Esophagus squamous epithelium (tissue), 5 donors: ENCODE measurements at regions of chr2 and their contacts with region 1.

Region 1: GRCh38 chr2:72150157-72150865 is 2.6 kb upstream of the CYP26B1 start:
- DNase-seq: no peak
- H3K4me3 ChIP-seq: peak overlapping the region in 3 of 4 donors; percentile 40 to 64 (median 50)
- H3K27ac ChIP-seq: peak overlapping the region in 1 of 4 donors; percentile 63
- H3K4me1 ChIP-seq: peaks cover 24 to 57% (median 40%) of the 10 kb centered on the region in 3 donors
- H3K27me3 ChIP-seq: peaks cover 4 to 89% (median 19%) of the 10 kb centered on the region in 4 donors
- CTCF ChIP-seq: peak; percentile 65 to 95 (median 86)
- POLR2A ChIP-seq: no peak

Region 2: GRCh38 chr2:71545572-71546274 is 604.6 kb before region 1 on chr2:
- intact Hi-C with region 1: loop called (anchors 5 kb)
- DNase-seq: no peak
- H3K4me3 ChIP-seq: peak overlapping the region in 2 of 4 donors; percentile 26 to 29
- H3K27ac ChIP-seq: peak overlapping the region in 2 of 4 donors; percentile 52 to 70
- H3K4me1 ChIP-seq: peaks cover 0 to 13% (median 3%) of the 10 kb centered on the region in 3 donors
- H3K27me3 ChIP-seq: peaks cover 0 to 24% (median 0%) of the 10 kb centered on the region in 4 donors
- CTCF ChIP-seq: peak; percentile 30 to 68 (median 50)
- POLR2A ChIP-seq: no peak

Region 3: GRCh38 chr2:71609958-71610357 is 540.4 kb before region 1 on chr2:
- intact Hi-C with region 1: loop called (anchors 10 kb)
- DNase-seq: no peak
- H3K4me3 ChIP-seq: no peak overlapping the region
- H3K27ac ChIP-seq: no peak overlapping the region
- H3K4me1 ChIP-seq: peaks cover under 1 to 23% (median 5%) of the 10 kb centered on the region in 3 donors
- H3K27me3 ChIP-seq: peaks cover 0 to 4% (median 0%) of the 10 kb centered on the region in 4 donors
- CTCF ChIP-seq: peak in 5 of 6 experiments; percentile 16 to 46 (median 28)
- POLR2A ChIP-seq: no peak

Region 4: GRCh38 chr2:71807975-71808451 is 342.3 kb before region 1 on chr2:
- intact Hi-C with region 1: loop called (anchors 5 kb)
- DNase-seq: no peak
- H3K4me3 ChIP-seq: no peak overlapping the region
- H3K27ac ChIP-seq: no peak overlapping the region
- H3K4me1 ChIP-seq: peaks cover 0 to 5% (median 0%) of the 10 kb centered on the region in 3 donors
- H3K27me3 ChIP-seq: no peaks in the 10 kb centered on the region
- CTCF ChIP-seq: no peak
- POLR2A ChIP-seq: no peak

Region 5: GRCh38 chr2:71923887-71924533 is 226.3 kb before region 1 on chr2:
- intact Hi-C with region 1: loop called (anchors 5 kb)
- DNase-seq: peak; percentile 18
- H3K4me3 ChIP-seq: no peak overlapping the region
- H3K27ac ChIP-seq: no peak overlapping the region
- H3K4me1 ChIP-seq: peaks cover 0 to 5% (median 0%) of the 10 kb centered on the region in 3 donors
- H3K27me3 ChIP-seq: no peaks in the 10 kb centered on the region
- CTCF ChIP-seq: peak; percentile 78 to 88 (median 82)
- POLR2A ChIP-seq: no peak

Region 6: DNA sequence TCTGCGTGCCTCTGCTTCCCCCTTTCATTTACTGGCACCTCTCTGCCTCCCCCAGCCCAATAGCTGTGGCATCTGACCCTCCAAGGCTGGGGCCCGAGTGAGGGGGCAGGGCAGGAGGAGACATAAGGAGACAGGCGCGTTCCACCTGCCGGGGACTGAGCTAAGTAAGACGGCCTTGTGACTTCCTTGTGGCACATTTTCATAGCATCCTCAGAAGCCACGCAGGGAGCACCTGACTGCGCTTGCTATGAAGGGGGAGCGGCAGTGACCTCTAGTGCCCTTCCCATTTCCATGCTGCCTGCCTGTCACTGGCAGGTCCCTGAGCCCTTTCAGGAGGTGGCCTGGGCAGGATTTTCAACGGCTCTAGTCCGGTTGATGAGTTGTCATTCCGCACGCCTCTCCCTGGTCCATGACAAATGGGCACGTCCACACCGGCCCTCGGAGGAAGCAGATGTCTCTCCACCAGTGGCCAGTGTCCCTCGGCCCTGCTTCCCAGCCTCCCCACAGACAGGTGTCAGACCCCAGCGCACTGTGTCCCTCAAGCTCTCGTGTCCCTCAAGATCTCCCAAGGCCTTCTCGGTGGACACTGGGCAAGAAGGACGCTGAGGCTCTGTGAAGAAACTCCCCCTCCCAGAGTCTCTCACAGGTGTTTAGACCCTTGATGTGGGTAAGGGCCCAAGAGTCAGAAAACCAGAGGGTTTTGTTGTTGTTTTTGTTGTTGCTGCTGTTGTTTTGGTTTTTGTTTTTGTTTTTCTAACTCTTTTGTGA is 45.3 kb before region 1 on chr2:
- intact Hi-C with region 1: no loop called
- DNase-seq: no peak
- H3K4me3 ChIP-seq: no peak overlapping the region
- H3K27ac ChIP-seq: no peak overlapping the region
- H3K4me1 ChIP-seq: peaks cover 0 to 31% (median 3%) of the 10 kb centered on the region in 3 donors
- H3K27me3 ChIP-seq: no peaks in the 10 kb centered on the region
- CTCF ChIP-seq: no peak
- POLR2A ChIP-seq: no peak